K562 (cell line): ENCODE measurements at regions of chr12 and their contacts with region 1.

Region 1: DNA sequence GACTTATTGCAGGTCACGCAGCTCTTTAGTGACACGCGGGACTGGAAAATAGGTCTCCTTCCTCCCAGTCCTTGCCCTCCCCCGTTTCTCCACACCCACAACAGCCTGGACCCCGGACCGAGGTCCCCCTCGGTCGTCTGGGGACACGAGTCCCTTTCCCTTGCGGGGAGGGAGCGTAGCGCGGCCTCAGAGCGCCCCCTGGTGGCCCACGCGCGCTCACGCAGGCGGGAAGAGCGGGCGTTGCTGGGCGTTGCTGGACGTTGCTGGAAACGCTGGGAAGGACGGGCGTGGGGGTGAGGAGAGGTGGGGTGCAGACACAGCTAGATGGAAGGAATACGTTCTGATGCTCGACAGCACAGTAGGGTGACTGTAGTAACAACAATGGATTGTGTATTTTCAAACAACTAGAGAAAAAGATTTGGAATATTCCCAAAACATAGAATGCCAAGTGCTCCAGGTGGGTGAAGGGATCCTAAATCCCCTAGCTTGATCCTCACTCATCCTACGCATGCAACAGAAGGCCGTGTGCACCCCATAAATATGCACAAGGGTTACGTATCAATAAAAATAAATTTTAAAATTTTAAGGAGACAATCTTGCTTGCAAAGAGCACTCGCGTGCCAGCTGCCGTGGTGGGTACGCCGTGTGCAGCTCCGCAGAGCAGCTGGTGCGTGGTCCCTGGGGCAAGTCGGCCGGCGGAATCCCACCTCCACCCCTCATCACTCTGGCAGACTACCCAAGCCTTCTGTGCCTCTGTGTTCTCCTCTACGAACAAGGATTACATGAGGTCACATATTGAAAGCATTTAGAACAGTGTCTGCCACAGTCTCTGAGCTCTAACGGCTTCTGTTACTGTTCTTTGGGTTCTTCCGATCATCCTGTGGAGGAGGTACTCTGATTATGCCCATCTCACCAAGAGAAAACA is 87.4 kb downstream of the B4GALNT3 start:
- DNase-seq: peak; percentile 80 to 85 (median 84)
- ATAC-seq: peak; percentile 96
- H3K4me3 ChIP-seq: no peak overlapping the region; the same call in 1 of the 2 replicates
- H3K27ac ChIP-seq: no peak overlapping the region
- H3K4me1 ChIP-seq: peaks cover 0 to 19% of the 10 kb centered on the region in 2 experiments; a peak in 3 of 5 replicates
- H3K27me3 ChIP-seq: peaks cover 3 to 56% of the 10 kb centered on the region in 2 experiments; a peak in 3 of 5 replicates
- CTCF ChIP-seq: peak; percentile 86 to 98 (median 90)
- EP300 ChIP-seq: peak; percentile 24; the same call in 1 of the 2 replicates
- POLR2A ChIP-seq: no peak
- RAD21 ChIP-seq: peak; percentile 90 to 94

Region 2: GRCh38 chr12:442235-442884 is 104.8 kb before region 1 on chr12:
- CTCF ChIA-PET with region 1: interaction called, 32 read pairs
- POLR2A ChIA-PET with region 1: no interaction called
- in situ Hi-C with region 1: no loop called
- intact Hi-C with region 1: loop called (anchors 1 kb)
- DNase-seq: peak; percentile 39 to 59 (median 46)
- ATAC-seq: peak; percentile 68
- H3K4me3 ChIP-seq: no peak overlapping the region
- H3K27ac ChIP-seq: no peak overlapping the region
- H3K4me1 ChIP-seq: no peaks in the 10 kb centered on the region
- H3K27me3 ChIP-seq: no peaks in the 10 kb centered on the region
- CTCF ChIP-seq: peak; percentile 64 to 81 (median 69)
- EP300 ChIP-seq: no peak
- POLR2A ChIP-seq: no peak
- RAD21 ChIP-seq: peak; percentile 65 to 67

Region 3: DNA sequence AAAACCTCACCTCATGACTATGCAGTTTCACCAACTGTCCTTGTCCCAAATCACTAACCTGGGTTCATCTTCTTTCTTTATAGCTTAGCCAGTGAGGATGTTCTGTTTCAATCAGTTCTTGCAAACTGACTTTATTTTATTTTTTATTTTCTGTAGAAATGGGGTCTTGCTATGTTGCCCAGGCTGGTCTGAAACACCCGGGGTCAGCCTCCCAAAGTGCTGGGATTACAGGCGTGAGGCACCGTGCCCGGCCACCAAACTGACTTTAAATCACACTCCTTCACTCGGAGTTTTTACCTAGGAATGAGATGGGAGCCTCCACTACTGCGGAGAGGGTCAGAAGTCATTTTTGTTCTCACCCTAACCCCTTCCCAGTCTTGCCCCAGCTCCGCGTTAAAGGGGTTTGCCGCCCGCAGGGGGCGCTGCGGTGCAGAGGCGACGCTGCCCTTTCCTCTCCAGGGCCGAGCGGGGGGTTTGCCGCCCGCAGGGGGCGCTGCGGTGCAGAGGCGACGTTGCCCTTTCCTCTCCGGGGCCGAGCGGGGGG is 94.4 kb before region 1 on chr12:
- CTCF ChIA-PET with region 1: interaction called, 48 read pairs
- POLR2A ChIA-PET with region 1: no interaction called
- in situ Hi-C with region 1: loop called (anchors 5 kb)
- intact Hi-C with region 1: loop called (anchors 2 kb)
- DNase-seq: peak in 3 of 4 experiments; percentile 22 to 51 (median 48)
- ATAC-seq: peak; percentile 84
- H3K4me3 ChIP-seq: no peak overlapping the region
- H3K27ac ChIP-seq: no peak overlapping the region
- H3K4me1 ChIP-seq: peaks cover 0 to 11% of the 10 kb centered on the region in 2 experiments; a peak in 2 of 5 replicates
- H3K27me3 ChIP-seq: peaks cover 2 to 9% of the 10 kb centered on the region in 2 experiments; a peak in 1 of 5 replicates
- CTCF ChIP-seq: peak in 1 of 3 experiments; percentile 78; a peak in 2 of 6 replicates
- EP300 ChIP-seq: no peak
- POLR2A ChIP-seq: no peak
- RAD21 ChIP-seq: no peak